HepG2 (cell line): ENCODE measurements at regions of chr11 and their contacts with region 1.

Region 1: DNA sequence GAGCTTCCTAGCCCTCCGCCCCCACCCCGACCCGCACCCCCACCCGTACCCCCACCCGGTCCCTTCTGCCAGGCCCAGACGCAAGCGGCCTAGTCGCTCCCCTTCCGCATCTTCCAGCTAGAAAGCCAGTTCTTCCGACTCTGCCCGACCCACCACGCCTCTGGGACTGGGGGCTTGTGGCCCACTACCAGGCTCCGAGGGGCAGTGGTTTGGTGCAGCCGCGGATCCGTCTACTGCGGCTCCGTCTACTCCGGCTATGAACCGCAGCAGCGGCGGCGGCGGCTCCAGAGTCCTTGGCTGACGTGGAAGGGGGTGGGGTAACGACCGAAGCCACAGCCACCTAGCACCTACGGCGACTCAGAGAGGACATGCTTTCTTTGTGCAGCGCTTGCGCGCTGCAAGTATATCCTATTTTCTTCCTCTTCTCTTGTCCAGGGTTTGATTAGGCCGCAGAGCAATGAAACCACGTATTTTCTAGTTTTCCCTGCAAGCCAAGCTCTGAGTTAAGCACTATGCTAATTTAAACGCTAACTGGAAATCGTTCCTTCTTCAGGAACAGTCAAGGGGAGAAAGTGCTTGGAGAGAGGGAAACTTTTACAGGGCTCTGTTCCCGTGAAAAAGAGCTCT is at the start of gene COPB1:
- DNase-seq: peak; percentile 87
- ATAC-seq: peak; percentile 97
- H3K4me3 ChIP-seq: peak within 1 kb of the TSS; percentile 78 to 99 (median 92)
- H3K27ac ChIP-seq: peak within 1 kb of the TSS; percentile 92
- H3K4me1 ChIP-seq: peaks cover 32% of the 10 kb centered on the region
- H3K27me3 ChIP-seq: no peaks in the 10 kb centered on the region; a peak in 1 of 5 replicates
- CTCF ChIP-seq: no peak
- EP300 ChIP-seq: no peak
- POLR2A ChIP-seq: peak; percentile 89 to 98
- RAD21 ChIP-seq: 0 out of 2 replicates have a peak, but pooled peaks have one; percentile 20
- total RNA-seq, gene COPB1: 195 and 221 TPM in 2 replicates

Region 2: DNA sequence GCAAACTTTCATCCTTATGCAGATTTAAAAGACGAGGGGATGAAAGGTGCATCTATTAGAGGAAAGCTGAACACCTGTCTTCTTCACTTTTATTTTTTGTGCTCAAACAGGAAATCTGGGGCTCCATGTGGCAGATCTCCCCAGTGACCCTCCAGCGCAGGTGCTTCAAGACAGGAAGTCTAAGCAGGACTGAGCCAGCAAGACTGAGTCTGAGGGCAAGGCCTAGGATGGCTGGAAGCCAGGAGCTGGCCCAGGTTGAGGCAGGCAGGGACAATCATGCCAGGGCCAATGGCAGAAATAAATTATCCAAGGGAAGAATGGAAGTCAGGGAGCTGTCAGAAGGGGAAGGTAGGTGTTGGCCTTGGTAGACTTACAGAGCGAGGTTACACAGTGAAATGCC is 638.3 kb before region 1 on chr11:
- CTCF ChIA-PET with region 1: no interaction called
- POLR2A ChIA-PET with region 1: no interaction called
- in situ Hi-C with region 1: no loop called
- intact Hi-C with region 1: no loop called
- DNase-seq: no peak
- ATAC-seq: no peak
- H3K4me3 ChIP-seq: no peak overlapping the region
- H3K27ac ChIP-seq: no peak overlapping the region
- H3K4me1 ChIP-seq: no peaks in the 10 kb centered on the region
- H3K27me3 ChIP-seq: no peaks in the 10 kb centered on the region; a peak in 1 of 5 replicates
- CTCF ChIP-seq: no peak
- EP300 ChIP-seq: no peak
- POLR2A ChIP-seq: no peak
- RAD21 ChIP-seq: no peak

Region 3: DNA sequence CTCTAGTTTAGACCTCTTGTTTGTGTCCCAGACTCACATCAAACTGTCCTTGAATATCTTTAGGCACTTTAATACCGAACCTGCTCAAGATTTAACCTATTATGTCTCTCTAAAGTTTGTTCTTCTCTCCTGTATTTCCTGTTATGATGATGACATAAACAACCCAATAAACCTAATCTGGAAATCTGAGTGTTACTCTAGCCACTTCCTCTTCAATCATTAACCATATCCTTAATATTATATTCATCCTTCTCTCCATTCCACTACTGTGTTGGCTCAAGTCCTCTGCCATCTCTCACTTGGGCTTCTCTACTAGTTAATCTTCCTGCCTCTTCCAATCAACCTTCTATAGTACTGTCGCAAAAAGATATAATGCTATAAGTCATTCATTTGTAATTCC is 36.0 kb before region 1 on chr11:
- CTCF ChIA-PET with region 1: no interaction called
- POLR2A ChIA-PET with region 1: no interaction called
- in situ Hi-C with region 1: no loop called
- intact Hi-C with region 1: loop called (anchors 2 kb)
- DNase-seq: no peak
- ATAC-seq: no peak
- H3K4me3 ChIP-seq: no peak overlapping the region
- H3K27ac ChIP-seq: no peak overlapping the region
- H3K4me1 ChIP-seq: no peaks in the 10 kb centered on the region
- H3K27me3 ChIP-seq: no peaks in the 10 kb centered on the region
- CTCF ChIP-seq: no peak
- EP300 ChIP-seq: no peak
- POLR2A ChIP-seq: no peak
- RAD21 ChIP-seq: no peak

Region 4: DNA sequence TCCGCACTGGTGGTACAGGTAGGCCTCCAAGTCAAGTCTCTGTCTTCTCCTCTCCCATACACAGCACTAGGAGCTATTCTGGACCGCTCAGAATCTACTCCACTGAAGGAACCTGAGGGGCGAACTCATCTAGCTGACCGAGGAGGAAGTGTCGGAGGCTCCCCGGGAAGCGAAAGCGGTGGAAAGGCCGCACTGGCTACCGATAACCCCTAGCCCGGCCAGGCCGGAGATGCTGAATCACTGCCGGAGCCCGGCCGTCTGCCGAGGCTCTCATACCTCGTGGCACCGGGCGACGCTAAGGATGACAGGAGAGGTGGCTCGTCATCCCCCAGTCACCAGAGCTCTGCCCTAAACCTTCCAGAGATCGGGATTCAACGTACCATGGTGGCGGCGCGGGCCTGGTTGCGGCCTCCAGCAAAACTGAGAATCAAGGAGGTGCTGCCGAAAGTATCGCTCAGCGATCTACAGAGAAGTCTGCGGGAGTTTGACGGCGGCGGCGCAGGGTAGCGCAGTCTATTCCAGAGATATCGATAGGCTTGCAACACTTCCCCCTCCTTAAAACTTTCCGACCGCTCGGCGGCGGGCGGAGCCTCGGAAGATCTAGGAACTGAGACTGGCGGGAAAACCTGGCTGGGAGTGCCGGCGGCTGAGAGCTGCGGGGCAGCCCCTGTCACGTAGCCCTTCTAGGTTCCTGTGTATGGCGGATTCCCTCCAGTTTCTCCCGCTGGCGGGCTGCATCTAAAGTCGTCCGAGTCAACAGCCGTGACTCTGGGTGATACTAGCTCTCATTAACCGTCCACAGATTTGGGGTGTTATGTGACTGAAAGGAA is 20.5 kb after region 1 on chr11 and contains the start of gene PSMA1:
- CTCF ChIA-PET with region 1: no interaction called
- POLR2A ChIA-PET with region 1: interaction called, 17 read pairs
- in situ Hi-C with region 1: no loop called
- intact Hi-C with region 1: no loop called
- DNase-seq: peak; percentile 94
- ATAC-seq: peak; percentile 95
- H3K4me3 ChIP-seq: peak within 1 kb of the TSS; percentile 75 to 89 (median 87)
- H3K27ac ChIP-seq: peak within 1 kb of the TSS; percentile 90
- H3K4me1 ChIP-seq: peaks cover 16% of the 10 kb centered on the region
- H3K27me3 ChIP-seq: no peaks in the 10 kb centered on the region; a peak in 1 of 5 replicates
- CTCF ChIP-seq: peak; percentile 37
- EP300 ChIP-seq: peak; percentile 23 to 61; a peak in 1 of 4 replicates
- POLR2A ChIP-seq: peak; percentile 78 to 79
- RAD21 ChIP-seq: no peak; the same call in 1 of the 2 replicates
- total RNA-seq, gene PSMA1: 229 and 297 TPM in 2 replicates